RWPE1 (cell line): ENCODE measurements at regions of chr17 and their contacts with region 1.

Region 1: DNA sequence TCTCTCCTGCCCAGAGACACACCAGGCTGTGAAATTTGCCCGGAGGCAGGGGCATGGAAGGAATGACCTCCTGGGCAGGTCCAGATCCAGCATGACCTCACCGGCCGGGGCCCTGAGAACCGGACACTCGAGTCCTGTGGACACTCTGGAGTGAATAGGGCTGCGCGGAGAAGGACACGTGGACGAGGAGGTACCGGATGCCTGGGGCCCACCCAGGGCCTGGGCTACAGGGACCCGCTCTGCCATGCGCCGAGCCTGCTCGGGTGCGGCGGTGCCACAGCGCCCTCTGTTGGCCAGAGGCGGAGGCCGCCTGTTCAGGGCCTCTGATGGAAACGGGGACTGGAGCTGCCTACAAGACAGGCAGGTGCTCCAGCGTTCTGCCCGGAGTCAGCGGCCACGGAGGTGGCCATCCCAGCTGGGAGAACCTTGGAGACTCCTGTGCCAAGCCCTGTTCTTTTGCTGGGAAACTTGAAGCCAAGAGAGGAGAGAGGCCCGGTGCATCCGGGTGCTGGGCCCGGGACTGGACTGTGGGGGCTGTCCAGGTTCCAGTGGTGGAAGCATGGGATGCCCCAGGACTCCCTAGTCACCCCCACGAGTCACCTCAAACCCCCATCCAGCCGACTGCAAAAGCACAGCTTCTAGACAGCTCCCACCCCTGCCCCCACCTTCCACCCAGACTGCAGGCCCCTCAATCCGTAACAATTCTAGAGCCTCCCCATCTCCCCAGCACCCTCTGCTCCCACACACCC is 19.3 kb upstream of the NXPH3 start:
- DNase-seq: peak; percentile 77
- H3K27ac ChIP-seq: peak overlapping the region; percentile 56; the same call in 1 of the 2 replicates
- CTCF ChIP-seq: peak; percentile 99

Region 2: DNA sequence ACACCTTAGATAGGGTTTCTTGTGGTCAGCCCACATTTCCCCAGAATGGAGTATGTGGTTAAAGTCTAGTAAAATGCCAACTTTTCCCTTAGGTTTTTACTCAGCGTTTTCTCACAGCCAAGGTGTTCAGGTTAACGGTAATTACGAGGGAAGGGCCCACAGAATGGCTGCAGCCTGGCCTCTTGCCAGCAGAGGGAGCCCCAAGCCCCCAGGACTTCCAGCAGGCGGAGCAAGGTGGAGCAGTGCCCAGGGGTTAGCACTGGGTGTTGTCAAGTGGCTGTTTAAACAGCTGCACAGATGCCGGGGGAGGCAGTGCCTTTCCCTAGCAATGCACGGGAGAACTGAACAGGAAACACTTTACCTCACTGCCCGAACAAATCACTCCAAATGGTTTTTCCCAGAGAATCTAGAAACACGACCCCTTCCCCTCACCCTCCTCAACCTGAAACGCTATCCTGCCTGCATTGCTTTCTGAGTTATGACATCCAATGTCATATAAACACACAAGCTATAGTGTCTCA is 148.4 kb before region 1 on chr17:
- CTCF ChIA-PET with region 1: interaction called, 45 read pairs
- POLR2A ChIA-PET with region 1: no interaction called
- DNase-seq: peak; percentile 82
- H3K27ac ChIP-seq: peak overlapping the region; percentile 63
- CTCF ChIP-seq: peak; percentile 93

Region 3: DNA sequence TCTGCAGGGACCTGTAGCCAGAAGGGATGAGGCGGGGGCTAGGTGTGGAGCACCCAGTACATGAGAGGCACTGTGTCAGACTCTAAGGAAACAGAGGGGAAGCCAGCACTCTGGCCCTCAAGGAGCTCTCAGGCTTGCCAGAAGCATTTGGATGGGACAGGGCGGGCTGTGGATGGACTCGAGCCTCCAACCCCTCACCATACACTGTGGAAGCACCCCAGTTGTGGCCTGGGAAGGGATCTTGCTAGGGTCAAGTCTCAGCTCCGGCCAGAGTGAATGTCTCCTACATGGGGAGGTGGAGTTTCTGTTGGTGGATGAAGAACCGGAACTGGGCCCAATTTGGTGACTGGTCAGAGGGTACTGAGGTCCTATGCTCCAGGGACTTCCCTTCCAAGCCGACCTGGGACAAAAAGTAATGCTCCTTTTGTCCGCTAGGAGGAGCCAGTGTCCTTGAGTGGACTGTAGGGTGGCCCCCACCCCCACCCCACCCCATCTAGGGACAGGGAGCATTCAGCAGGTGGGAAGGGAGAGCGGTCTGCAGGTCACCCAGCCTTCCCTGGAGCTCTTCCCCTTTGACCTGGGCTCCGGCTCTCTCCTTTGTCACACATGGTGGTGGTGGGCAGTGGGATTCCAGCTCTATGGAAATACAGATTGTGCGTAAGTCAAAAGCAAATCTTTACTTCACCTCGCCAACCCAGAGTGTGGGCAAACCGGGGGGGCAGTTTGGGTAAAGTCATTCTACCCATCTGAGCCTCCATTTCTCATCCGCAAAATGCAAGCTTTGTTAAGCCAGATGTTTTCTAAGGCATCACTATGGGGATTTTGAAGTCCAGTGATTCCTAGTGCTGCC is 121.4 kb before region 1 on chr17:
- CTCF ChIA-PET with region 1: interaction called, 43 read pairs
- POLR2A ChIA-PET with region 1: no interaction called
- DNase-seq: peak; percentile 87
- H3K27ac ChIP-seq: no peak overlapping the region
- CTCF ChIP-seq: peak; percentile 81

Region 4: GRCh38 chr17:49496183-49496866 is 60.1 kb before region 1 on chr17:
- CTCF ChIA-PET with region 1: interaction called, 90 read pairs
- POLR2A ChIA-PET with region 1: no interaction called
- DNase-seq: peak; percentile 56
- H3K27ac ChIP-seq: no peak overlapping the region
- CTCF ChIP-seq: peak; percentile 96

Region 5: DNA sequence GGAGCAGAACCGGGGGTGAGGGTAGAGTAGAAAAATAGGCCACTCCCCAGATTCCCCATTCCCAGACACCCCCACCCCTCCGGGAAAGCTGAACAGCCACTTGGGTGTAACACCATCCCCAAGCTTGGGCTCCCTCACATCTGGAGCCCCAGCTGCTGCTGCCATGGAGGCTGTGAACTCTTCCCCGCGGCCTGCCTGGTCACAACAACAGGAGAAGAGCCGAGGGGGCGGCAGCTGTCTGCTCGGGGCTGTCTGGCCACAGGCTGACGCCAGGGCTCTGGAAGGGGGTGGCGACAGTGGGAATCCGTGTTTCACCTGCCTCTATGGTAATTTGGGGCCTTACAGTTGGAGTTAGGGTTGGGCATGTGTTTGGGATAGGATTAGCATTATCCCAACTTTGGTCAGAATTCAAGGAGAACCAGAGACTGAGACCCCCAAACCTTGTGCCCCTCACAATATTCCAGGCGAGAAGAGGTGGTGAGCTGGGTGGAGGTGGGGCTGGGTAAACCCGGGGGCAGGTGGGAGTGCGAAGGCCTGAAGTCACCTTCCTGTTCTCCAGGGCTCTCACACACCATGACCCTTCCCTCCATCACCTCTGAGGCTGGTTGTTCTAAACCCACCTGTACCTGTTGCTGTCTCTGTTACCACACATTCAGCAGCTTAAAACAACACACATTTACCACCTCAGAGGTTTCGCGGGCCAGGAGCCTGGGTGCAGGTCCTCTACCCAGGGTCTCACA is 10.4 kb before region 1 on chr17:
- CTCF ChIA-PET with region 1: interaction called, 14 read pairs
- POLR2A ChIA-PET with region 1: no interaction called
- DNase-seq: no peak
- H3K27ac ChIP-seq: no peak overlapping the region
- CTCF ChIP-seq: no peak

Region 6: DNA sequence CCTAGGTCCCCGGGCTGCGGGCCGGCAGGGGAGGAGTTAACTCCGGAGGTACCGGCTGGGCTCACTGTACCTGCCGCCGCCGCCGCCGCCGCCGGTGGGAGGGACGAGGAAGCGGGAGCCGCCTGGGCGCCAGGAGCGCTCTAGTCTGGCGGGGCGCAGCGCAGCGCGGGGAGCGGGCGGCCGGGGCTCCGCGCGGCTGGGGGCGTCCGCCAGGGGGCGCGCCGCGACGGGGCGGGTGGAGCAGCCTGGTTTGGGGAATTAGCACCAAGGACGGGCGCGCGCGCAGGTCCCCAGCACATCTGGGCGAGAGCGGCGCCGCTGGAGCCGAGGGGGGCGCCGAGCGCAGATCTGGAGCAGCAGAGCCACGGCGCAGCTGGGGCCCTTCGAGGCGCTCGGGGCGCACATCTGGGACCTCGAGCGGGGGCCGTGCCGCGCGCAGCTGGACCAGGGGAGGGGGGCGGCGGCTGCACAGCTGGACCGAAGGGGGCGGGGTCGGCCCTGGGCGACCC is 19.2 kb after region 1 on chr17 and contains the start of gene NXPH3:
- CTCF ChIA-PET with region 1: interaction called, 11 read pairs
- POLR2A ChIA-PET with region 1: no interaction called
- DNase-seq: peak; percentile 67
- H3K27ac ChIP-seq: no peak within 1 kb of the TSS
- CTCF ChIP-seq: peak; percentile 92

Region 7: DNA sequence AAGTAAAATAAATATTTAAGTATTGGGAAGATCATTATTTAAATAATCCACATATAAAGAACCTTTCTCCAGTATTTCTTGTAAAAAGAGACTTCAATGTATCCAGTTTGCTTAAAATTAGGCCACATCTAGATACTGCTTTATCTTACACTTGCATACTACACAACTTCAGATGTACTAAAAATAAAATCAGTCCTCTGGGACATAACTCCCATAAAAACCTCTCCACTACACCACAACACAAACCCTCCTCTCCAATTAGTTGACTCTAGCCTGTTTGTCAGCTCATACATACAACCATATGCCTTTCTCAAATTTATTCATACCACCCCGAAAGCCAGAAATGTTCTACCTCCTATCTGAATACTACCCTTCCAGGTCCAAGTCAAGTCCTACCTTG is 99.8 kb after region 1 on chr17:
- CTCF ChIA-PET with region 1: no interaction called
- POLR2A ChIA-PET with region 1: no interaction called
- DNase-seq: no peak
- H3K27ac ChIP-seq: no peak overlapping the region
- CTCF ChIP-seq: no peak